Dorsolateral prefrontal cortex (tissue), 120 donors: ENCODE measurements at regions of chr9 and their contacts with region 1.

Region 1: GRCh38 chr9:35102926-35103659 is at the start of gene STOML2:
- DNase-seq: peak; percentile 93 to 98 (median 96)
- H3K4me3 ChIP-seq: peak within 1 kb of the TSS; percentile 53 to 98 (median 83)
- H3K27ac ChIP-seq: peak within 1 kb of the TSS in 58 of 59 donors; percentile 50 to 97 (median 84)
- H3K27me3 ChIP-seq: no peaks in the 10 kb centered on the region
- CTCF ChIP-seq: peak in 40 of 56 donors; percentile 5 to 65 (median 38)
- total RNA-seq, gene STOML2: 36.9 to 78.5 (median 61.0) TPM

Region 2: GRCh38 chr9:35071814-35072460 is 31.2 kb before region 1 on chr9:
- intact Hi-C with region 1: loop called in 1 of 2 experiments (anchors 2 kb)
- DNase-seq: peak; percentile 54 to 84 (median 66)
- H3K4me3 ChIP-seq: peak overlapping the region; percentile 70 to 100 (median 93)
- H3K27ac ChIP-seq: peak overlapping the region; percentile 60 to 99 (median 97)
- H3K27me3 ChIP-seq: no peaks in the 10 kb centered on the region
- CTCF ChIP-seq: peak in 51 of 56 donors; percentile 9 to 70 (median 46)